Endothelial cell of umbilical vein (primary cell): ENCODE measurements at regions of chr1 and their contacts with region 1.

Region 1: GRCh38 chr1:225746361-225747179 is 31.1 kb upstream of the SRP9 start:
- DNase-seq: peak; percentile 87
- H3K4me3 ChIP-seq: peak overlapping the region; percentile 34 to 70 (median 60)
- H3K27ac ChIP-seq: peak overlapping the region; percentile 74
- H3K4me1 ChIP-seq: peaks cover 7% of the 10 kb centered on the region
- H3K27me3 ChIP-seq: no peaks in the 10 kb centered on the region
- CTCF ChIP-seq: peak in 1 of 2 donors; percentile 22
- POLR2A ChIP-seq: peak; percentile 45

Region 2: DNA sequence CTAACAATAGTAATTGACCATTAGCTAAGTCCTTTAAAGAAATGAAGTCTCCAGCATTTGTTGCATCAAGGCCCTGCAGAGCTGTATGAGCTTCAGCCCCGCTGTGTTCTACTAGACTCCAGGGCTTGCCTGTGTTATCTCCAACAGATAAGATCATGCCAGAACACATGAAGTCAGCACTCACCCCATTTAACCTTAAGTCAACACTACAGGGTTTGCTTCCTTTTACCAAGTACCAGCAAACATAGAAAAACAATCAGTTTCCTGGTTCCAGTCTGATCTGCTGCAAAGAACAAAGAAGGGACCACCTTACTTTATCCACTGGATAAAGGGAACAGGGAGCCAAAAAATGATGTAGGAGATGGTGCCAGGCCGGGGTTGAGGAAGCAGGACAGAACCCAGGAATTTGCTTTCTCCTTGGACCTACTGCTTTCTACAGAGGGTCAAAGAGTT is 52.4 kb before region 1 on chr1:
- CTCF ChIA-PET with region 1: interaction called, 4 read pairs
- POLR2A ChIA-PET with region 1: no interaction called
- dilution Hi-C with region 1: no loop called
- intact Hi-C with region 1: loop called (anchors 2 kb)
- DNase-seq: peak; percentile 89
- H3K4me3 ChIP-seq: no peak overlapping the region
- H3K27ac ChIP-seq: peak overlapping the region; percentile 93
- H3K4me1 ChIP-seq: peaks cover 12% of the 10 kb centered on the region
- H3K27me3 ChIP-seq: no peaks in the 10 kb centered on the region
- CTCF ChIP-seq: no peak
- POLR2A ChIP-seq: no peak